Left ventricle myocardium inferior (tissue), 1 donor: ENCODE measurements at regions of chr4 and their contacts with region 1.

Region 1: GRCh38 chr4:119286377-119287002 is 35.4 kb downstream of the FABP2 start:
- DNase-seq: no peak
- H3K4me3 ChIP-seq: no peak overlapping the region
- H3K27ac ChIP-seq: peak overlapping the region; percentile 66
- H3K4me1 ChIP-seq: peaks cover 52% of the 10 kb centered on the region
- H3K27me3 ChIP-seq: no peaks in the 10 kb centered on the region
- CTCF ChIP-seq: peak; percentile 75

Region 2: DNA sequence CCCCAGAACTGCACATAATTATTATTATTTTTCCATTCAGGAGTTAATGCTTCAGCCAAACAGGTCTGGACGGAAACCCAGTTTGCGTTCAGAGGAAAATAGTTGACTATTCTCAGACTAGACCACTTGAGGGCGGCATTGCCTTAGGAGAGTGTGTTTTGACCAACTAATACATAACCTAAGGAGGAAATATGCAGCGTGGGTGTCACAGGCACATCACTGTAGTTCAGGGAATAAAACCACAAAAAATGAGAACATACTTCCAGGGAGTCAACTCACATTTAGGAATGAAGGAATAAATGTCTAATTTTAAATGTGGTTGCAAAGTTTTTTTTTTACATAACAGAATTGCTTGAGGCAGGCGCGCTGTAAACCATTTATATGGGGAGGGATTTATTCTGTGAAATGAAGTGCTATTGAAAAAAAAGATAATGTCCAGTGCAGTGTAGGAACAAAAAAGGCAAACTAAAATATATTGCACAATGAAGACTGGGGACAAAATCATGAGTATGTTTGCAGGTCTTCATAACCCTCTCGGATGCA is 304.6 kb before region 1 on chr4:
- intact Hi-C with region 1: loop called (anchors 5 kb)
- DNase-seq: no peak
- H3K4me3 ChIP-seq: no peak overlapping the region
- H3K27ac ChIP-seq: peak overlapping the region; percentile 65
- H3K4me1 ChIP-seq: peaks cover 89% of the 10 kb centered on the region
- H3K27me3 ChIP-seq: no peaks in the 10 kb centered on the region
- CTCF ChIP-seq: peak; percentile 80

Region 3: GRCh38 chr4:119041951-119042560 is 244.4 kb before region 1 on chr4:
- intact Hi-C with region 1: loop called (anchors 5 kb)
- DNase-seq: no peak
- H3K4me3 ChIP-seq: no peak overlapping the region
- H3K27ac ChIP-seq: peak overlapping the region; percentile 68
- H3K4me1 ChIP-seq: peaks cover 91% of the 10 kb centered on the region
- H3K27me3 ChIP-seq: no peaks in the 10 kb centered on the region
- CTCF ChIP-seq: peak; percentile 72

Region 4: GRCh38 chr4:119099227-119099801 is 187.2 kb before region 1 on chr4:
- intact Hi-C with region 1: loop called (anchors 5 kb)
- DNase-seq: no peak
- H3K4me3 ChIP-seq: no peak overlapping the region
- H3K27ac ChIP-seq: peak overlapping the region; percentile 38
- H3K4me1 ChIP-seq: peaks cover 55% of the 10 kb centered on the region
- H3K27me3 ChIP-seq: no peaks in the 10 kb centered on the region
- CTCF ChIP-seq: no peak

Region 5: DNA sequence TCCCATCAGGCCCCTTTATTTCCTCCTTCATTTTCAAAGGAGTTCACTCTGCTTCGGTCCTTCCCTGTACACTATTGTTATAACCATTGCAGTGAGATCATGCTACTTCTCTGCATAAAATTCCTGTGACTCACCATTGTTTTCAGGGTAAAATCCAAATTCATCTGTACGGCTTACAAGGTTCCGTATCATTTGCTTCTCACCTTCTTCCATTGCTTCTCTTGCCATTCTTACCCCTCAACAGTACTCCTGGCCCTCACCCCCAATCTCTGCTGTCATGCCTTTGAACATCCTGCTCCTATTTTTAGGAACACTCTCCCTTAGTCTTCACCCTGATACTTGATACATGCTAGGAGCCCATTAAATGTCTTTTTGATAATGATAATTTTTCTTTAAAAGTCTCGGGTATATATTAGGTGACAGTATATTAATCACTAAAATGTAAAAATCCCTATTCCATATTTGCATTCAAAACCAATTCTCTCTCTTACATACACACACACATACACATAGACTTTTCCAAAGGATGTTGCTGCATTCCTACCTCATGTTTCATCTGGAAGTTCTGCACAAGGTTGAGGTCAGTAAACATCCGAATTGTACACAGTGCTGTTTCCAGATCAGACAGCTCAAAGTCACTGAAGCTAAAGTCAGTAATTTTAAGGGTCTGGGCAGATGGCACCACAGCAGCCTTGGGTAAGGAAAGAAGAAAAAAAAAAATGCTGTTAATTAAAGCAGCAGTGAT is 238.7 kb after region 1 on chr4:
- intact Hi-C with region 1: no loop called
- DNase-seq: no peak
- H3K4me3 ChIP-seq: no peak overlapping the region
- H3K27ac ChIP-seq: no peak overlapping the region
- H3K4me1 ChIP-seq: peaks cover 29% of the 10 kb centered on the region
- H3K27me3 ChIP-seq: no peaks in the 10 kb centered on the region
- CTCF ChIP-seq: no peak